Activated T-helper 2 cell treated with anti-CD3 and anti-CD28 coated beads, Interferon-gamma antibody, Interleukin-2, Interleukin-4, amounts not matched to agents 10 μg/mL and 5 μg/mL and 100 μg/mL, durations not matched to agents 14 hours and 24 hours and 36 hours (primary cell): ENCODE measurements at regions of chr5 and their contacts with region 1.

Region 1: GRCh38 chr5:123099514-123100151 is 10.6 kb downstream of the PRDM6 start:
- DNase-seq: no peak
- H3K4me3 Mint-ChIP-seq: no peak overlapping the region
- H3K27ac Mint-ChIP-seq: no peak overlapping the region
- H3K4me1 Mint-ChIP-seq: peaks cover 4% of the 10 kb centered on the region
- H3K27me3 Mint-ChIP-seq: peaks cover 76% of the 10 kb centered on the region

Region 2: GRCh38 chr5:122311961-122312590 is 787.6 kb before region 1 on chr5 and contains the start of gene SNCAIP:
- intact Hi-C with region 1: loop called (anchors 5 kb)
- DNase-seq: no peak
- H3K4me3 Mint-ChIP-seq: peak within 1 kb of the TSS; percentile 33
- H3K27ac Mint-ChIP-seq: no peak within 1 kb of the TSS
- H3K4me1 Mint-ChIP-seq: peaks cover 2% of the 10 kb centered on the region
- H3K27me3 Mint-ChIP-seq: peaks cover 53% of the 10 kb centered on the region
- total RNA-seq, gene SNCAIP: not detected in 2 replicates

Region 3: DNA sequence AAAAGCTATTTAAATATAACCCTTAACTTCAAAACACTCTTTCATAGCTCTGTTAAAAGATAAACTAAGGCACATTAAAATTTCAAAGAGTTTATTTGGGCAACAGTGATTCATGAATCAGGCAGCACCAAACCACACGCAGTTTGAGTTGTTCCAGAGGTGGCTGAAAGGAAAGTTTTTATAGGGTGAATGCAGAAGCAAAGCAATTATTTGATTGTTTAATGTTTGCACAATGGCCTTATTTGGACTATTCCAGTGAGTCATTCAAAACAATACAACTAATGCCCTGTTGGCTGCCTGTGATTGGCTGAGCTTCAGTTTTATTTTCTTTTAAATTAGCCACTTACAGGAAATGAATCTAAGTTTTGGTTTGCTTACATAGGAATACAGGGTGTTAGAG is 198.2 kb after region 1 on chr5:
- intact Hi-C with region 1: loop called (anchors 5 kb)
- DNase-seq: no peak
- H3K4me3 Mint-ChIP-seq: no peak overlapping the region
- H3K27ac Mint-ChIP-seq: no peak overlapping the region
- H3K4me1 Mint-ChIP-seq: no peaks in the 10 kb centered on the region
- H3K27me3 Mint-ChIP-seq: peaks cover 12% of the 10 kb centered on the region